K562 (cell line): ENCODE measurements at regions of chr7 and their contacts with region 1.

Region 1: GRCh38 chr7:38335492-38336147 is 62.2 kb upstream of the TARP start:
- DNase-seq: peak; percentile 85 to 97 (median 86)
- ATAC-seq: peak; percentile 94
- H3K4me3 ChIP-seq: peak overlapping the region; percentile 19
- H3K27ac ChIP-seq: peak overlapping the region; percentile 79
- H3K4me1 ChIP-seq: peaks cover 23 to 40% of the 10 kb centered on the region in 2 experiments
- H3K27me3 ChIP-seq: no peaks in the 10 kb centered on the region
- CTCF ChIP-seq: peak; percentile 100
- EP300 ChIP-seq: peak; percentile 59
- POLR2A ChIP-seq: peak; percentile 79
- RAD21 ChIP-seq: peak; percentile 92 to 93

Region 2: DNA sequence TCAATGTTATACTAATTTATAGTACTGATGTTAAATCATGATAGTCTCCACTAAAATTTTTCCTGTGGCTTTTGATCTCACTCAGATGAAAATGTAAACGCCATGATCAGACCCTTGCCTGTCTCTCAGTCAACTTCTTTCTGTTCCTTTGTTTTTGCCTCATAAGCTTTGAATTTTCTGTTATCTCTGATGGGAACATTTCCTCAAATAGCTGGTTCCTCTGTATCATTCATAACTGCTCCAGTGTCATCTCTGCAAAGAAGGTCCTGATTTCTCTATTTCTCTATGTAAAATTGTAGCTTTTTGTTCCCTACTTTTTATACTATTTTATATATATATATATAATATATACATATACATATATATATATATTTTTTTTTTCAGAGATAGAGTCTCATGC is 584.5 kb before region 1 on chr7:
- CTCF ChIA-PET with region 1: no interaction called
- POLR2A ChIA-PET with region 1: no interaction called
- in situ Hi-C with region 1: no loop called
- intact Hi-C with region 1: no loop called
- DNase-seq: no peak
- ATAC-seq: no peak
- H3K4me3 ChIP-seq: no peak overlapping the region
- H3K27ac ChIP-seq: no peak overlapping the region
- H3K4me1 ChIP-seq: no peaks in the 10 kb centered on the region; a peak in 1 of 5 replicates
- H3K27me3 ChIP-seq: no peaks in the 10 kb centered on the region
- CTCF ChIP-seq: no peak
- EP300 ChIP-seq: no peak
- POLR2A ChIP-seq: no peak
- RAD21 ChIP-seq: no peak

Region 3: DNA sequence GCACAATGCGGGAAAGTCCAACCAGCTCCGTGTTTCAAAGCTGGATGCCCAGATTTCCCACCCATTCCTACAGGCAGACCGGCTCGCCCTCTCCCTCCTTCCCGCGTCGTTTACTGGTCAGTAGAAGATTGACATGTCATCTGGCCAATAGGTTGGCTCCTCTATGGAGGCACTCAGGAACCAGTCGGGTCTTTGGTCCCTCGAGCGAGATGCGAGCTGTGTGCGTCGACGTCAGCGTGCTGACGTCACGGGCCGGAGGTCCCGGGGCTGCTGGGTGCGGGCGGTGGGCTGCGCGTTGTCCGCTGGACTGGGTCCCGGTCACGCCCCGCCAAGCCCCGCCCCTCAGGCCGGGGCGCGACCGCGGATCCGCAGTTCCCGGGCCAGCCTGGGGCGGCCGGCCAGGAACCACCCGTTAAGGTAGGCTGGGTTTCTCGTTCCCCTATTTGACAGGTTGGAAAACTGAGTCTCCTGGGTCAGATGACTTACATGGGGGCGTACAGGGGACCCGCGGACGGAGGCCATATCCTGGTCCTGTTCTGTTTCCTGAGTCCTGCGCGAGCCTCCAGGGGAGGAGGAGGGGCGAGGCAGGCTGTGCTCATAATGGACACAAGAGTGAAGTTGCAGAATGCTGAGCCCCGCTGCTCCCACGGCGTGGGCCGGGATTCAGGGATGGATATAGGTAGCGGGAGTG is 157.5 kb before region 1 on chr7 and contains the start of gene STARD3NL:
- CTCF ChIA-PET with region 1: no interaction called
- POLR2A ChIA-PET with region 1: no interaction called
- in situ Hi-C with region 1: no loop called
- intact Hi-C with region 1: loop called (anchors 2 kb)
- DNase-seq: peak; percentile 96 to 100 (median 97)
- ATAC-seq: peak; percentile 94
- H3K4me3 ChIP-seq: peak within 1 kb of the TSS; percentile 68
- H3K27ac ChIP-seq: peak within 1 kb of the TSS; percentile 76
- H3K4me1 ChIP-seq: peaks cover 7 to 26% of the 10 kb centered on the region in 2 experiments
- H3K27me3 ChIP-seq: no peaks in the 10 kb centered on the region
- CTCF ChIP-seq: 0 out of 6 replicates have a peak, but pooled peaks of 1 of the 3 experiments have one; percentile 22
- EP300 ChIP-seq: no peak
- POLR2A ChIP-seq: peak; percentile 83
- RAD21 ChIP-seq: no peak
- polyA plus RNA-seq, gene STARD3NL: 79.6 to 90.0 TPM

Region 4: GRCh38 chr7:38215735-38216670 is 119.6 kb before region 1 on chr7:
- CTCF ChIA-PET with region 1: interaction called, 8 read pairs
- POLR2A ChIA-PET with region 1: interaction called, 3 read pairs
- in situ Hi-C with region 1: loop called (anchors 5 kb)
- intact Hi-C with region 1: loop called (anchors 5 kb)
- DNase-seq: peak; percentile 81 to 86 (median 83)
- ATAC-seq: peak; percentile 99
- H3K4me3 ChIP-seq: no peak overlapping the region
- H3K27ac ChIP-seq: no peak overlapping the region
- H3K4me1 ChIP-seq: no peaks in the 10 kb centered on the region
- H3K27me3 ChIP-seq: no peaks in the 10 kb centered on the region
- CTCF ChIP-seq: peak; percentile 94 to 96 (median 96)
- EP300 ChIP-seq: no peak
- POLR2A ChIP-seq: no peak
- RAD21 ChIP-seq: peak; percentile 90 to 91

Region 5: DNA sequence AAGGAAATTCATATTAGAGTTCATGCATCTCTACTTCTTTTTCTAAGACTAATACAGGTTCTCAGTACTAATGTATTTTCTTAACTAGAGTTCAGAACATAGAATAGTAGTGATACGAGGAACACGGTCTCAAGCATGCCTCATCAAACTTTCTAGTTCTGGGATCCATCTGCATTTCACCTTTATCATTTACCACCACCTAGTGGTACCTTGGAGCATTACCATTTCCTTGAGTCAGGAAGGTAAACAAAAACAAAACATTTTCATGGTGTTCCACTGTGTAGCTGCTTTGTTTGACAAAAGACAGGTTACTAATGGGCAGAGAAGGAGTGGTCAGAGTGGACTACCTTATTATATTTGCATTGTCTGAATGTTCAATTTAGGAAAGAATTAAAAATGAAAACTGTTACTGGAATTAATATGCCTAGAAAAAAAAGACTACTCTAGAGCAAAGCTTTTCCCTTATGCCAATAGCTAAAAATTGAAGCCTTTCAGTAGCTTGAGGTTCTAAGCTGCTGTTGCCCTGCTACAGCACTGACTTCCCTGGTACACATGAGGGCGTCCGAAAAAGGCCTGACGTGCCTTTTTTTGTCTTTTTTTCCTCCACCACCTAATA is 113.0 kb before region 1 on chr7:
- CTCF ChIA-PET with region 1: interaction called, 3 read pairs
- POLR2A ChIA-PET with region 1: no interaction called
- in situ Hi-C with region 1: loop called (anchors 5 kb)
- intact Hi-C with region 1: loop called (anchors 5 kb)
- DNase-seq: peak; percentile 54 to 73 (median 65)
- ATAC-seq: peak; percentile 88
- H3K4me3 ChIP-seq: no peak overlapping the region
- H3K27ac ChIP-seq: no peak overlapping the region
- H3K4me1 ChIP-seq: no peaks in the 10 kb centered on the region
- H3K27me3 ChIP-seq: no peaks in the 10 kb centered on the region
- CTCF ChIP-seq: peak; percentile 79 to 90 (median 82)
- EP300 ChIP-seq: no peak
- POLR2A ChIP-seq: no peak
- RAD21 ChIP-seq: peak; percentile 87 to 92

Region 6: GRCh38 chr7:38318803-38319416 is 16.7 kb before region 1 on chr7:
- CTCF ChIA-PET with region 1: no interaction called
- POLR2A ChIA-PET with region 1: interaction called, 11 read pairs
- in situ Hi-C with region 1: no loop called
- intact Hi-C with region 1: no loop called
- DNase-seq: peak in 3 of 4 experiments; percentile 30 to 66 (median 55)
- ATAC-seq: peak; percentile 92
- H3K4me3 ChIP-seq: no peak overlapping the region
- H3K27ac ChIP-seq: no peak overlapping the region
- H3K4me1 ChIP-seq: no peaks in the 10 kb centered on the region; a peak in 1 of 5 replicates
- H3K27me3 ChIP-seq: 0 out of 5 replicates have a peak, but pooled peaks cover 0 to 5% of the 10 kb centered on the region in 2 experiments
- CTCF ChIP-seq: peak; percentile 59 to 82 (median 63)
- EP300 ChIP-seq: no peak
- POLR2A ChIP-seq: no peak
- RAD21 ChIP-seq: peak; percentile 79 to 91